HepG2 (cell line): ENCODE measurements at regions of chr20 and their contacts with region 1.

Region 1: GRCh38 chr20:44435630-44436335 is 39.9 kb upstream of the TTPAL start:
- DNase-seq: peak; percentile 90
- ATAC-seq: peak; percentile 1; the same call in 2 of the 3 replicates
- H3K4me3 ChIP-seq: no peak overlapping the region
- H3K27ac ChIP-seq: peak overlapping the region; percentile 33
- H3K4me1 ChIP-seq: peaks cover 89% of the 10 kb centered on the region
- H3K27me3 ChIP-seq: no peaks in the 10 kb centered on the region
- CTCF ChIP-seq: no peak
- EP300 ChIP-seq: no peak
- POLR2A ChIP-seq: no peak
- RAD21 ChIP-seq: no peak

Region 2: GRCh38 chr20:44422083-44422482 is 13.7 kb before region 1 on chr20:
- CTCF ChIA-PET with region 1: no interaction called
- POLR2A ChIA-PET with region 1: interaction called, 37 read pairs
- in situ Hi-C with region 1: no loop called
- intact Hi-C with region 1: no loop called
- DNase-seq: no peak
- ATAC-seq: no peak
- H3K4me3 ChIP-seq: no peak overlapping the region
- H3K27ac ChIP-seq: peak overlapping the region; percentile 12
- H3K4me1 ChIP-seq: peaks cover 63% of the 10 kb centered on the region
- H3K27me3 ChIP-seq: no peaks in the 10 kb centered on the region
- CTCF ChIP-seq: no peak
- EP300 ChIP-seq: no peak
- POLR2A ChIP-seq: peak in 1 of 2 experiments; percentile 35; a peak in 1 of 4 replicates
- RAD21 ChIP-seq: no peak

Region 3: GRCh38 chr20:44448753-44449546 is 13.2 kb after region 1 on chr20:
- CTCF ChIA-PET with region 1: no interaction called
- POLR2A ChIA-PET with region 1: interaction called, 18 read pairs
- in situ Hi-C with region 1: no loop called
- intact Hi-C with region 1: no loop called
- DNase-seq: peak; percentile 68
- ATAC-seq: peak; percentile 54
- H3K4me3 ChIP-seq: no peak overlapping the region
- H3K27ac ChIP-seq: no peak overlapping the region
- H3K4me1 ChIP-seq: peaks cover 69% of the 10 kb centered on the region
- H3K27me3 ChIP-seq: no peaks in the 10 kb centered on the region
- CTCF ChIP-seq: peak; percentile 72
- EP300 ChIP-seq: no peak
- POLR2A ChIP-seq: no peak
- RAD21 ChIP-seq: peak; percentile 58

Region 4: DNA sequence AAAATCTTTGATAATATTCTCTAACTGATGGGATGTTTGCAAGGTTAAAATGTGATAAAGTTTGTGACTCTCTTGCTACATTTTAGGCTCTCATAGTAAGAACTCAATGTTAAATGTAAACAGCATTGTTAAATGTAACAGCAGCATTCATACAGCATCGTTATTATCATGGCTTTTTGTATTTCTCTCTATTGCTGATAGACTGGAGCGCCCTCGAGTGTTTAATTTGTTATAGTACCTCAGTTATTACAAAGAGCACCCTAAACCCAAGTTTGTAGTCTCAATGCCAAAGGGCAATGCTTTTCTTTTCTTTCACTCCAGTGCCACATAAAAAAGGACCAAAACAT is 25.0 kb after region 1 on chr20:
- CTCF ChIA-PET with region 1: no interaction called
- POLR2A ChIA-PET with region 1: interaction called, 5 read pairs
- in situ Hi-C with region 1: no loop called
- intact Hi-C with region 1: loop called (anchors 2 kb)
- DNase-seq: peak; percentile 73
- ATAC-seq: peak; percentile 60
- H3K4me3 ChIP-seq: peak overlapping the region; percentile 6 to 55 (median 18); a peak in 4 of 6 replicates
- H3K27ac ChIP-seq: peak overlapping the region; percentile 58
- H3K4me1 ChIP-seq: peaks cover 69% of the 10 kb centered on the region
- H3K27me3 ChIP-seq: no peaks in the 10 kb centered on the region
- CTCF ChIP-seq: peak; percentile 89
- EP300 ChIP-seq: no peak
- POLR2A ChIP-seq: no peak
- RAD21 ChIP-seq: peak; percentile 82